Activated CD4-positive, alpha-beta T cell treated with anti-CD3 and anti-CD28 coated beads for 36 hours (primary cell): ENCODE measurements at regions of chr4 and their contacts with region 1.

Region 1: DNA sequence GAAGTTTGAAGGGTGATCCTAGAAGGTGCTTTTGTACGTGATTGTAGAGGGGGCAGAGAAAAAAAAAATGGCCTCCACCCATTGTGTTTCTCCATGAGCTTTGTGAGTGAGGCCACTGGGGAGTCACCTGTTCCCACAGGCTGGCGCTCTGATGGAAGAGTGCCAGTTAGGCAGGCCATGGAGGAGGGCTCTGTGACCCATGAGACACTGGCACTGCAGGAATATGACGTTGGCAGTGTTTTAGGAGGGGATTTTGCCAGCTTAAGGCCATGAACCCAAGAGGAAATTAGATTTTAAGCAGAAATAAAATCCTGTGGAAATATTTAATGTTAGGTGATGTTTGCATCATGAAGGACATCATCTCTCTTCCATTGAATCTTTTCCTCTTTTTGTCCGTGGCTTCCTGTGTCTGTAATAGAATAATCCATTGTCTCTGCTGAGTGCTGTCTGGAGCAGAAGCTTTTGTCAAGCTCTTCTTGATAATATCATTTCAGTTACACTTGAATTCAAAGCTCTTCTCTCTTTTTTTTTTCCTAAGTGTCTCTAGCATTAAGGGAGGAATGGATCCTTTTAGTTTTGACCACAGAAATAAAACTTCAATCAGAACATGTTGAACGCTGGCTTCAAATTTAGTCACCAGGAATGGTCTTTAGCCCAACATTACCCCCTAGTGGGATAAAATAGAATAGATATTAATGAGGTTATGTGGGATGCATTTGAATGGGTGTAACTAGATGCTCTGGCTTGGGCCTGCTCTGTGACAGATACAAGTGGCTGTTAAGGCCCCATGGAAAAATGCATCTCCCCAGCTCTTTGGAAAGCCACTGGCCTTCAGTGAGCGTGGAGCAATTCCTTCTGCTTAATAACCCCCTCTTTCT is 41.0 kb upstream of the UCP1 start:
- DNase-seq: no peak
- ATAC-seq: peak; percentile 71
- H3K4me3 Mint-ChIP-seq: no peak overlapping the region
- H3K27ac Mint-ChIP-seq: no peak overlapping the region
- H3K4me1 Mint-ChIP-seq: no peaks in the 10 kb centered on the region
- H3K27me3 Mint-ChIP-seq: no peaks in the 10 kb centered on the region

Region 2: DNA sequence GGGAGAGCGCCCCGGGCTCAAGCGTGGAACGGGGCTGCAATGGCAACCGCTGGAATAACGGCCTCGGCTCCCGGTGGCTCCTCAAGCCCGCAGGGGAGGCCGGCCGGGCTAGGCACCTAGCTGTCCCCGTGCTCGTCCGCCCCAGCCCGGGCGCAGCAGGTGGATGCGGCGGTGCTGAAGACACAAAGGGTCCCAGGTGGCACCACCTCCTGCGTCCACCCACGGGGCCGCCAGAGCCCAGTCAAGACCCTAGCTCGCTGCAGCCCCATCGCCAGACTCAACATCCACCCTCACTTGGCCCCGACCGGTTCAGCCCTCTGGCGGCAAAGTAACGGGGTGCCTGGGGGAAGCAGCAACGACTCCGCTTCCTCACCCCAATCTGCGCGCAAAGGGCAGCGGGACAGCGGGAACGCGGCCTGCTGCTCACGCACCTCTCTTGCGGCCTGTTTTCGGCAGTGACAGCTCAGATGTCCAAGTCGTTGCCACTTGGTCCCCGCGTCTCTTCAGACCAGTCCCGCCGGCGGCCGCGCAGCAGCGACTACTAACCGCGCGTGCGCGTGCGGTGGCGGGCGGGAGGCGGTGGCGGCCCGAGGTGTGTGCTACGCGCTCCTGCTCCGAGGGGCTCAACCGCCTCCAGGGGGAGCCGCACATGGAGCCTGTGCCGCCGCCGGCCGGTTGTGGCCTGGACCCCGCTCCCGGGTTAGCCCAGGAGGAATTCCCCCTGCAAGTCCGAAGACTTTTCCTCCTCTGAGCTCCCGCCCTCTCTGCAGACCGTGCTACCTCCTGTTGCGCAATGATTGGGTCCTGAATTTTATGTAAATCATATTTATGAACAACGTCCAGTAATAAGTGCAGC is 182.5 kb before region 1 on chr4 and contains the start of gene CLGN:
- CTCF ChIA-PET with region 1: interaction called, 3 read pairs
- POLR2A ChIA-PET with region 1: no interaction called
- intact Hi-C with region 1: loop called (anchors 5 kb)
- DNase-seq: peak; percentile 74
- ATAC-seq: peak; percentile 88
- H3K4me3 Mint-ChIP-seq: peak within 1 kb of the TSS; percentile 72
- H3K27ac Mint-ChIP-seq: peak within 1 kb of the TSS; percentile 20
- H3K4me1 Mint-ChIP-seq: peaks cover 5% of the 10 kb centered on the region
- H3K27me3 Mint-ChIP-seq: peaks cover 40% of the 10 kb centered on the region
- total RNA-seq, gene CLGN: 0.18 to 0.19 TPM

Region 3: GRCh38 chr4:140595065-140595464 is 14.7 kb before region 1 on chr4:
- CTCF ChIA-PET with region 1: interaction called, 11 read pairs
- POLR2A ChIA-PET with region 1: interaction called, 4 read pairs
- intact Hi-C with region 1: no loop called
- DNase-seq: peak; percentile 14
- ATAC-seq: peak; percentile 30
- H3K4me3 Mint-ChIP-seq: no peak overlapping the region
- H3K27ac Mint-ChIP-seq: no peak overlapping the region
- H3K4me1 Mint-ChIP-seq: peaks cover 11% of the 10 kb centered on the region
- H3K27me3 Mint-ChIP-seq: peaks cover 23% of the 10 kb centered on the region

Region 4: DNA sequence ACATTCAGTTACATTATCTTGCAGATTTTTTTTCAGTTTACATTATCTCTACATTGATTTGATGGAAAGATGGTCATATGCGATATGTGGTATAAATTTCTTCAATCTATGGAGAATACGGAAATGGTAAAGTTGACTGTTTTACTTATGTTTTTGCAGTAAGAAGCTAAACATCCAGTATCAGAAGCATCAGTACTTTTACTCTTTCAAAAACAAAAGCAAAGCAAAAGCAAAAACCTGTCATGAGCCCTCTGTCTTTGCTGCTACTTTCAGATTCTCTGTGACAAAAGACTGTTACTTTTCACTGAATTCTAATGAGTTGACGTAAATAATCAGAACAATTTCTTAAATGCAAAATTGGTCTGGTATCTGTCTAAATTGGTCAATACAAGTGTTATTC is 11.4 kb after region 1 on chr4:
- CTCF ChIA-PET with region 1: interaction called, 18 read pairs
- POLR2A ChIA-PET with region 1: no interaction called
- intact Hi-C with region 1: no loop called
- DNase-seq: no peak
- ATAC-seq: no peak
- H3K4me3 Mint-ChIP-seq: no peak overlapping the region
- H3K27ac Mint-ChIP-seq: no peak overlapping the region
- H3K4me1 Mint-ChIP-seq: no peaks in the 10 kb centered on the region
- H3K27me3 Mint-ChIP-seq: no peaks in the 10 kb centered on the region

Region 5: GRCh38 chr4:140851032-140851636 is 241.3 kb after region 1 on chr4:
- CTCF ChIA-PET with region 1: no interaction called
- POLR2A ChIA-PET with region 1: no interaction called
- intact Hi-C with region 1: loop called in 1 of 2 experiments (anchors 10 kb)
- DNase-seq: peak; percentile 37
- ATAC-seq: no peak
- H3K4me3 Mint-ChIP-seq: no peak overlapping the region
- H3K27ac Mint-ChIP-seq: no peak overlapping the region
- H3K4me1 Mint-ChIP-seq: no peaks in the 10 kb centered on the region
- H3K27me3 Mint-ChIP-seq: peaks cover 18% of the 10 kb centered on the region